SK-N-SH (cell line): ENCODE measurements at regions of chr19 and their contacts with region 1.

Region 1: GRCh38 chr19:46192992-46193650 is 36.4 kb upstream of the IGFL1 start:
- DNase-seq: no peak
- H3K4me3 ChIP-seq: no peak overlapping the region
- H3K27ac ChIP-seq: no peak overlapping the region
- H3K4me1 ChIP-seq: no peaks in the 10 kb centered on the region
- H3K27me3 ChIP-seq: no peaks in the 10 kb centered on the region; the same call in 1 of the 2 replicates
- CTCF ChIP-seq: no peak
- EP300 ChIP-seq: no peak
- RAD21 ChIP-seq: no peak

Region 2: GRCh38 chr19:46021531-46022041 is 171.5 kb before region 1 on chr19:
- CTCF ChIA-PET with region 1: interaction called, 17 read pairs
- POLR2A ChIA-PET with region 1: no interaction called
- DNase-seq: no peak
- H3K4me3 ChIP-seq: no peak overlapping the region
- H3K27ac ChIP-seq: no peak overlapping the region
- H3K4me1 ChIP-seq: no peaks in the 10 kb centered on the region; a peak in 1 of 4 replicates
- H3K27me3 ChIP-seq: no peaks in the 10 kb centered on the region
- CTCF ChIP-seq: no peak
- EP300 ChIP-seq: no peak
- RAD21 ChIP-seq: no peak

Region 3: DNA sequence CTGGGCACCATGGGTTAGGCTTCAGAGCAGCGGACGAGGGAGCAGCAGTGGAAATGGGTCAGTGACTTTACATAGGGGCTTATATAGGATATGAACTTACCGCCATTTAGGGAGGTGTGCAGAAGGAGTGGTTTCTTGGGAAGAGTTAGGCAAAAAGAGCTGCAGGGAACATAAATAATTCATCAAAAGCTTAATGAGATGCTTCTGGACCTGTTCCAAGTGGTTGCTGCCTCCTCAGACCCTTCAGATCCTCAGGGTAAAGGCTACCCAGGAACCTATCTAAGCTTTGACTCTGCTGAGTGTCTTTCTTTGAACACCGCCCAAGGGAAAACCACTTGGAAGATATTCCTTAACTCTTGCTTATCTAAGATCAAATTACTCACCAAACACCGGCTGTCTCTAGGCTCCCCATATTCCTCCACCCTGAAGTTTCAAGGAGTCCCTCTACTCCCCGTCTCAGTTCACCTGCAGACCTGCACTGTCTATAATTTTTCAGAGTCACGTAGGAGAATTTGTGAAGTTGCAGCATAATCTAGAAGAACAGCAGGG is 152.1 kb before region 1 on chr19 and contains the start of gene IGFL4:
- CTCF ChIA-PET with region 1: interaction called, 14 read pairs
- POLR2A ChIA-PET with region 1: no interaction called
- DNase-seq: no peak
- H3K4me3 ChIP-seq: no peak within 1 kb of the TSS
- H3K27ac ChIP-seq: no peak within 1 kb of the TSS
- H3K4me1 ChIP-seq: no peaks in the 10 kb centered on the region; a peak in 1 of 4 replicates
- H3K27me3 ChIP-seq: peaks cover 66% of the 10 kb centered on the region; the same call in 1 of the 2 replicates
- CTCF ChIP-seq: no peak
- EP300 ChIP-seq: no peak
- RAD21 ChIP-seq: no peak
- polyA plus RNA-seq, gene IGFL4: not detected in 2 replicates

Region 4: DNA sequence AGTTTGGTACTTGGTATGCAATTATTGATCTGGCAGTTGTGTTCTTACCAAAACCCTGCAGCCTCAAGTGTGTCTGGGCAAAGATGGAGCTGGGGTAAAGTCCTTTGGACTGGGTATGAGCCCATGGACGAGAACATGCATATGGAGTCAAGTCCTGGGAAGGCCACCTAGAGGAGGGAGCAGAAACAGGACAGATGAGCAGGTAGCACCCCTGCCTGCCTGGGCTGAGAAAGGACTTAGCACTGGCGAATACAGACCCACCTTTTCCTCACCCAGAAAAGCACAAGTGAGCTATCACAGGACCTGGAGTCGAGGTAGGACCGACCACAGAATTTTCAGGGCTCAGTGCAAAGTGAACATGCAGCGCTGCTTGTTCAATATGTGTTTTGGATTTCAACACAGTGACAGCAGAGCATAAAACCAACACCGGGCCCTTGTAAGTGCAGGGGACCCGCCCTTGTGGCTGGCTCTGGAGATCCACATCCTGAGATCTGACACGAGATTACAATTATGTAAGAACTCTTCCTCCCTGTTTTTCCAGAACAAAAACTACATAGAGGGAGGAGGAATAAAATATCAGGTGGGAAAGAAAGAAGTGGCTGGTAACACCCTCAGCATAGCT is 19.1 kb before region 1 on chr19:
- CTCF ChIA-PET with region 1: interaction called, 16 read pairs
- POLR2A ChIA-PET with region 1: no interaction called
- DNase-seq: no peak
- H3K4me3 ChIP-seq: no peak overlapping the region
- H3K27ac ChIP-seq: no peak overlapping the region
- H3K4me1 ChIP-seq: no peaks in the 10 kb centered on the region
- H3K27me3 ChIP-seq: no peaks in the 10 kb centered on the region
- CTCF ChIP-seq: no peak
- EP300 ChIP-seq: no peak
- RAD21 ChIP-seq: no peak

Region 5: GRCh38 chr19:46213103-46213775 is 20.1 kb after region 1 on chr19:
- CTCF ChIA-PET with region 1: no interaction called
- POLR2A ChIA-PET with region 1: no interaction called
- DNase-seq: no peak
- H3K4me3 ChIP-seq: no peak overlapping the region
- H3K27ac ChIP-seq: no peak overlapping the region
- H3K4me1 ChIP-seq: peaks cover 0 to 13% of the 10 kb centered on the region in 2 experiments; a peak in 1 of 4 replicates
- H3K27me3 ChIP-seq: peaks cover 13% of the 10 kb centered on the region; the same call in 1 of the 2 replicates
- CTCF ChIP-seq: no peak
- EP300 ChIP-seq: no peak
- RAD21 ChIP-seq: no peak

Region 6: GRCh38 chr19:46265217-46265828 is 72.2 kb after region 1 on chr19:
- CTCF ChIA-PET with region 1: interaction called, 18 read pairs
- POLR2A ChIA-PET with region 1: no interaction called
- DNase-seq: peak; percentile 78
- H3K4me3 ChIP-seq: peak overlapping the region in 1 of 2 experiments; percentile 7; a peak in 1 of 4 replicates
- H3K27ac ChIP-seq: no peak overlapping the region
- H3K4me1 ChIP-seq: no peaks in the 10 kb centered on the region
- H3K27me3 ChIP-seq: peaks cover 30% of the 10 kb centered on the region
- CTCF ChIP-seq: peak; percentile 87
- EP300 ChIP-seq: no peak
- RAD21 ChIP-seq: peak; percentile 90

Region 7: DNA sequence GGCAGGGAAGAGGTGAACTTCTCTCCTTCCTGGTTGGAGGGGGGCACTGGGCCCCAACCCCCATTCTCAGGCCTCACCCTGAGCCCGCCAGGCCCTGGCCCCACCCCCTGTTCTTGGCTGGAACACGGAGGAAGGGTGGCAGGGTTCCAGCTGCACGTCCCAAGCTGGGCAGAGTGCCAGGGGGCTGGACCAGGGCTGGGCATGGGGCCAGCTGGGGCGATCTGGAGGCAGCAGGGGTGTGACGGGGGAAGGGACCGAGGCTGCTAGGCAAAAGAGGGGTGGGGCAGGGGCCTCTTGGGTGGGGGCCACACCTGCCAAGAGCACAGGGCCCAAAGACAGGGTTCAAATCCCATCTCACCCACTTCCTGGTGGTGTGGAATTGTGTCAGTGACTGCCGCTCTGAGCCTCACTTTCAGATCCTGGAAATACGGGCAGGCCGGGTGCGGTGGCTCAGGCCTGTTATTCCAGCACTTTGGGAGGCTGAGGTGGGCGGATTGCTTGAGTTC is 105.9 kb after region 1 on chr19:
- CTCF ChIA-PET with region 1: no interaction called
- POLR2A ChIA-PET with region 1: no interaction called
- DNase-seq: peak; percentile 99
- H3K4me3 ChIP-seq: no peak overlapping the region
- H3K27ac ChIP-seq: peak overlapping the region in 1 of 2 experiments; percentile 29; a peak in 1 of 4 replicates
- H3K4me1 ChIP-seq: peaks cover 15 to 34% of the 10 kb centered on the region in 2 experiments
- H3K27me3 ChIP-seq: no peaks in the 10 kb centered on the region
- CTCF ChIP-seq: no peak
- EP300 ChIP-seq: peak; percentile 50 to 52; a peak in 2 of 4 replicates
- RAD21 ChIP-seq: no peak